OCI-LY7 (cell line): ENCODE measurements at regions of chr20 and their contacts with region 1.

Region 1: DNA sequence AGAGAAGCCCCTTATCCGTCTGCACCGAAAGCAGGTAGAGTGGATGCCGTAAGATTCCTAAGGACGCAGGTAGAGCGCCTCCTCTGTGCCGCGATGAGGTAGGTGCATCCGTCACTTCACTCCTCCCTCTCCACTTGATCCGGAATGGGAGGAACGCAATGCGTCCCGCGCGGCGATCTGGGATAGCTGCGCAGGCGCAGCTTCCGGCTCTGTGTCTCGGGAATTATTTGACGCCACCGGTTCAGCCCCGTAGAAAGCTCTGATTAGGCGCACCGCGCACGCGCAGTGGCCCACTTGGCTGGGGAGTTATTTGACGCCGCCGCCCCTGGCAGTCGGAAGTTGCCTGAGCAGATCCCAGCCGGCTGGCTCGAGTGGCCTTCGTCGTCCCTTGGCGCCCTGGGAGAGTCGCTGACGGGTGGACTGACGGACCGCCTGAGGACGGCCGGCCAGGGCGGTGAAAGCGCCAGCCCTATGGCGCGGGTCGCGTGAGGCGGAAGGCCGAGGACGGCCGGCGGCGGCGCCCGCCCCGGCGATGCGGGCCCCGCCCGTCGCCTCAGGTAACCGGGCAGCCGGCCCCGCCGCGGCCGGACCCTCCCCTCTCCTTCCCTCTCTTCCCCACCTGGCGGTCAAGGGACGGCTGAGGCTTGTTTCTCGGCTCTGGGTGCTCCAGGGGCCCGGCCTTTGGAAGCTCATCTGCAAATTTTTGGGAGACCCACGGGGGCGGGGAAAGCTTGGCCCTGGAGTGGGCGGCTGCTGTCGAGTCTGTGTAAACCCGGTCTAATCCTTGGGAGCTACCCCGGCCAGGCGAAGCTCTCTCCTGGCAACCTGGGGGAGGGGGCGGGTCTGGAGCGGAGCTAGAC is at the start of gene RALGAPB:
- DNase-seq: peak; percentile 99
- H3K4me3 ChIP-seq: peak within 1 kb of the TSS; percentile 98
- H3K27ac ChIP-seq: no peak within 1 kb of the TSS
- H3K4me1 ChIP-seq: peaks cover 22% of the 10 kb centered on the region
- CTCF ChIP-seq: peak; percentile 74
- total RNA-seq, gene RALGAPB: 19.0 and 20.9 TPM in 2 replicates

Region 2: GRCh38 chr20:38434743-38435554 is 37.8 kb before region 1 on chr20 and contains the start of gene SNHG17:
- CTCF ChIA-PET with region 1: interaction called, 5 read pairs
- POLR2A ChIA-PET with region 1: interaction called, 10 read pairs
- intact Hi-C with region 1: loop called (anchors 2 kb)
- DNase-seq: peak; percentile 96
- H3K4me3 ChIP-seq: peak within 1 kb of the TSS; percentile 85
- H3K27ac ChIP-seq: peak within 1 kb of the TSS; percentile 59
- H3K4me1 ChIP-seq: peaks cover 26% of the 10 kb centered on the region
- CTCF ChIP-seq: peak; percentile 98
- total RNA-seq, gene SNHG17: 30.0 and 49.1 TPM in 2 replicates

Region 3: GRCh38 chr20:38446441-38447209 is 26.1 kb before region 1 on chr20:
- CTCF ChIA-PET with region 1: interaction called, 10 read pairs
- POLR2A ChIA-PET with region 1: interaction called, 22 read pairs
- intact Hi-C with region 1: loop called (anchors 1 kb)
- DNase-seq: peak; percentile 97
- H3K4me3 ChIP-seq: peak overlapping the region; percentile 88
- H3K27ac ChIP-seq: peak overlapping the region; percentile 69
- H3K4me1 ChIP-seq: peaks cover 21% of the 10 kb centered on the region
- CTCF ChIP-seq: peak; percentile 92

Region 4: DNA sequence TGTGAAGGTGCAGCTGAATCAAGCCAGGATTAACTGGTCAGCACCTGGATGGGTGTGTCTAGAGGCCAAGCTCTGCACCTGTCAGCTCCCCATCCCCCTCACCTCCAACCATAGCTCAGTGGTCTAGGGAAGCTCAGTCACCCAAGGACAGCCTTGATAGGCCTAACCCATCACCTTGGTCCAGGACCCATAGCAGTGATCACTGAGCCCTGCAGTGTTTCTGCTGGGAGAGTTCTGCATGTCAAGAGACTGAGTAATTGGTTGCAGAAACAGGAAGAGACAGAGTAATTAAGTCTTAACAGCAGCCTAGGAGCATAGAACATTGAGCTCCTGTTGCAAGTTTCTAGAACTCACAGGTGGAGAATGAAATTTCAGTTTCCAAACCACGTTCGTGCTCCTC is 18.8 kb before region 1 on chr20:
- CTCF ChIA-PET with region 1: interaction called, 16 read pairs
- POLR2A ChIA-PET with region 1: interaction called, 22 read pairs
- intact Hi-C with region 1: no loop called
- DNase-seq: peak; percentile 86
- H3K4me3 ChIP-seq: peak overlapping the region; percentile 7
- H3K27ac ChIP-seq: peak overlapping the region; percentile 83
- H3K4me1 ChIP-seq: peaks cover 32% of the 10 kb centered on the region
- CTCF ChIP-seq: no peak

Region 5: DNA sequence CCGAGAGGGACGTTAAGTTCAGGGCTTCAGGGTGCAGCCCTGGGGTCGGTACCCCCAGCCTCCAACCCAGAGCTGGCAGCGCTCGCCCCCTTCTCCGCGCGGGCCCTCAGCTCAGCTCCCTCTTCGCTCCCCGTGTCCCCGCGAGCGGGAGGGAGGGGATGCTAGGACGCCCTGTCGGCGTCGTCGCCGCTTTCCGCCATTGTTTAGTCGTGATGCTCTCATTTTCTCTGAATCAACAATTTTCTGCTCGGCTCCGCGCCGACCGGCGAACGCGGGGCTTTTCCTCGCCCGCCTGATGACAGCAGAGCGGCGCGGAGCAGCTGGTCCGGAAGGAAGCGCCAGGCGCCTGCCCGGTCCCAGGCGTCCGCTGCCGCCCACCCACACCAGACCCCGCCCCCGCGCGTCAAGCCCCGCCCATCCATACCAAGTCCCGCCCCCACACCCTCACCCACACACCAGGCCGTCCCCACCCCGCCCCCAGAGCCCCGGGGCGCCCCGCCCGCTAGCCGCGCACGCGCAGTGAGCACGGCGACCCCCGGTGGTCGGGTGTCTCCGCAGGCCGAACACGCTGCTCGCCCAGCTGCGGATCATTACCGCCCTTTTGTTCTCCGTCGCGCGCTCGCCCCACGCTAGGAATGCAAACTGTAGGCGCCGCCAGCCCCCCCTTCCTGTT is 201.5 kb after region 1 on chr20:
- CTCF ChIA-PET with region 1: no interaction called
- POLR2A ChIA-PET with region 1: no interaction called
- intact Hi-C with region 1: no loop called
- DNase-seq: peak; percentile 86
- H3K4me3 ChIP-seq: peak overlapping the region; percentile 73
- H3K27ac ChIP-seq: peak overlapping the region; percentile 8
- H3K4me1 ChIP-seq: peaks cover 9% of the 10 kb centered on the region
- CTCF ChIP-seq: no peak